ENCODE measurements at regions of chr14 and their contacts with region 1.

Region 1: DNA sequence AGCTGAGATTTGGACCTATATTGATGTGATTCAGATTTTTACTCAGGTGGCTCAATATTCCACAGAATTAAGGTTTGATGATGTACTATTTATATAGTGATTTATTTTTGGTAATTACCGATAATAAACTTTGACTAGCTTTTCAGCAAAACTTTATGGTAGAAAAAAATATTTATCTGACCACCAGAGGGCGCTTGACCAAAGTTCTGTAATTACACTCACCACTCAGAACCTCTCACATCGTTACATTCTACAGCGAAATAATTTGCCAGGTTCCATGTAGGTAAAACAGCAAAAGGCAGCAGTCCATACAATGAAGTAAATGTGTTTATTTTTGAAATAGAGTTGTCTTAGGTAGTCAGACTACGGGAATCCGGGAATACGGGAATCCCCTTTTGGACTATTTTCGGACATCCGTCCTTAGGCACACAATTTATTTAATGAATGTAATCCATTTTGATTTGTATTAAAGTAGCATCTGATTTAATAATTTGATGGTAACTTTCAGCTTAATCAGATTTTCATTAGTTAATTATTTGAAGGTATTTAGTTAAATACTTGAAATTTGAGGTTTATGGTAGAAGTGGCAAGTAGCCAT is 143.0 kb upstream of the DDHD1 start:
- DNase-seq: no peak
- ATAC-seq: no peak
- H3K4me3 ChIP-seq: no peak overlapping the region
- H3K27ac ChIP-seq: no peak overlapping the region
- H3K4me1 ChIP-seq: no peaks in the 10 kb centered on the region
- H3K27me3 ChIP-seq: no peaks in the 10 kb centered on the region
- CTCF ChIP-seq: peak in 4 of 5 experiments; percentile 48 to 71 (median 58)
- POLR2A ChIP-seq: no peak

Region 2: DNA sequence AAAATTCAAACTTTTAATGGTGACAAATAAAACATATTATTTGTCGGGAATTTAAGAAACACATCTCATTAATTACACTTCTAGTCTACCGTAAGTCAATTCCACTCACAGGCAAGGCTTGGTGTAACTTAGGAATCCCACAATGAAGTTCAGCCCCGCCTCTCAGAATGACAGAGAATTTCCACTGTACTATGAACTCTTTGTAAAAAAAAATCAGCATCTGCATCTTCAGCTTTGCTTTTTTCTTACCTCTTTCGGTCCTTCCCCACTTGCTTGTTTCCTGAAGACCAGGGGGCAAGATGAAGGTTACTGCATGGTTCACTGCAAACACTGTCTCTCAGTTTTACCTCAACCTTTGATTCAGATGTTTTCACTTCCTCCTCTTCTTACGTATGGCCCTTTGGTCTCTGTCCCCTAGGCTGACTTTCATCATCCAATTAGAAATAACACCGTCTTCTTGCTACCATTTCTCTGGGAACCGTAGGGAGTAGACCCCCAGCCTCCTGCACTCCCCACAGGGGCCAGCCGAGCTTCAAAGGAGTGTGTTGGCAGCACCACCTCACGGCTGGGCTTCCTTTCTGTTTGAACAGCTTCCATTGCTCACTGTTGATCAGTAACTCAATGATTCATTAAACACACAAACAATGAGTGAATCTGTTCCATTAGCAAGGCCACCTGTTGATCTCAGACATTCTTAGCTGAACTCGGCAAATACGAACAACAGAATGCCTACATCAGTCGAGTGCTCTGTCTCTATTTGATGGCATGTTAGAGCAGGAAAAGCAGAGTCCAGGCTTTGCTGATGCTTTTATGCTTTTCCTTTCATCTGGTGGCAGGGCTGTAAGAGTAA is 317.5 kb after region 1 on chr14:
- in situ Hi-C with region 1: no loop called
- intact Hi-C with region 1: no loop called
- DNase-seq: no peak
- ATAC-seq: no peak
- H3K4me3 ChIP-seq: no peak overlapping the region
- H3K27ac ChIP-seq: no peak overlapping the region
- H3K4me1 ChIP-seq: no peaks in the 10 kb centered on the region
- H3K27me3 ChIP-seq: no peaks in the 10 kb centered on the region
- CTCF ChIP-seq: no peak
- POLR2A ChIP-seq: no peak

Region 3: DNA sequence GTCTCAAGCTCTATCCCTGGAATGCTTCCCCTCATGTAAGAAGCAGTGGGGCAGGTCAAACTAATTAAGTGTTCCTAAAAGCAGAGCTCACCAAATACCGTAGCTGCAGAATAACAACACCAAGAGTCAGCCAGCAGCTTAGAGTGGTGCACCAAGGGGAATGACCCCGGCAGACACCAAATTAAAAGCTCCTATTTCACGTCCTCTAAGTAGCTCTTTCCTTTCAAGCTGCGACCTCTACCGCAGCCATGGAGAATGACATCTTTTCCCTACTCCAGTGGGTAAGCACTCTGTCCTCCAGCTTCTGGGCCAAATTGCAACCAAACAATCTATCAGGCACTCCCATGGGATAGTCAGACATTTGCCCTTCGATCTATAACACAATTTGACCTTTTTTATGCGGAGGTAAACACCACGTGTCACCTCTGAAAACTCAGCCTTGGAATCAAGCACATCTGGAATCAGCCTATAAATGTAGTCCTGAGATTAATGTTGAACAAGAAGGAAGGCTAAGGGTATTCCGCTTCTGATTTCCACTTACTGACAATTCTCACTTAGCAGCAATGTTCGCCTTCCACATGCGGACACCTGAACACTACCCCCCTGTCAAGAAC is 1033.1 kb after region 1 on chr14:
- in situ Hi-C with region 1: loop called in 1 of 4 experiments (anchors 25 kb)
- intact Hi-C with region 1: no loop called
- DNase-seq: no peak
- ATAC-seq: peak in 1 of 2 donors; percentile 62
- H3K4me3 ChIP-seq: no peak overlapping the region
- H3K27ac ChIP-seq: no peak overlapping the region
- H3K4me1 ChIP-seq: no peaks in the 10 kb centered on the region
- H3K27me3 ChIP-seq: no peaks in the 10 kb centered on the region
- CTCF ChIP-seq: peak in 4 of 5 experiments; percentile 12 to 46 (median 22)
- POLR2A ChIP-seq: no peak

Region 4: DNA sequence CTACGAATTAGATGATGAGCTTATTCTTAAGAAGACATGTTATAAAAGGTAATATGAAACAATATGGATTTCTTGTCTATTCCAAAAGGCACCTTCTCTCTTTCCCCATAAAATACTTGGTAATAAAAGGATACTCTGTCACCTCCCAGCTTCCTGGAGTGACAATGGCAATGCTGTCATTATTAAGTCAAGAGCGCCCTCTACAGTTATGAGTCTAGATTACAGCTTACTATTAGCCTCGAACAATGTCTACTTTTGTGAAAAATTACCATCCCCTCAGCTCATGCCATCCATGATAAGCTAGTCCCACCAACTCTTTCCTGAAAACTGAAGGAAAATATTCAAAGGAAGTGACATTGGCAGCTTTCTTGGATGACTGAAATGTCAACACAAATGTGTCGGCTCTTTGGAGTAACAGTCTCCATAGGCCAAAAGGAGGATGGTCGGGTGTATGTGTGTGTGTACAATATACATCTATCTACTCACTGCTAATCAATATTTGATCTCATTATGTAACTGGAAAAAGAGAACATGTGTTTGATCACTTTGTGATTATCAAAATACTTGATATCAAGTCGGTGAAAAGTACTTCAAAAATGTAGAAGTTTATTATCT is 1052.0 kb after region 1 on chr14:
- in situ Hi-C with region 1: loop called in 1 of 4 experiments (anchors 25 kb)
- intact Hi-C with region 1: loop called (anchors 2 kb)
- DNase-seq: no peak
- ATAC-seq: peak in 1 of 2 donors; percentile 36
- H3K4me3 ChIP-seq: no peak overlapping the region
- H3K27ac ChIP-seq: no peak overlapping the region
- H3K4me1 ChIP-seq: peaks cover 2 to 12% of the 10 kb centered on the region in 2 donors
- H3K27me3 ChIP-seq: peaks cover 6 to 12% (median 7%) of the 10 kb centered on the region in 3 donors
- CTCF ChIP-seq: peak; percentile 8 to 54 (median 45)
- POLR2A ChIP-seq: no peak